IMR-90 (cell line): ENCODE measurements at regions of chr20 and their contacts with region 1.

Region 1: GRCh38 chr20:41028348-41029148 is at the start of gene TOP1:
- DNase-seq: peak; percentile 100
- ATAC-seq: peak; percentile 98
- H3K4me3 ChIP-seq: peak within 1 kb of the TSS; percentile 76
- H3K27ac ChIP-seq: peak within 1 kb of the TSS; percentile 97
- H3K4me1 ChIP-seq: peaks cover 5% of the 10 kb centered on the region
- H3K27me3 ChIP-seq: no peaks in the 10 kb centered on the region
- CTCF ChIP-seq: no peak
- POLR2A ChIP-seq: peak; percentile 96
- RAD21 ChIP-seq: no peak
- total RNA-seq, gene TOP1: 14.0 and 20.8 TPM in 2 replicates

Region 2: DNA sequence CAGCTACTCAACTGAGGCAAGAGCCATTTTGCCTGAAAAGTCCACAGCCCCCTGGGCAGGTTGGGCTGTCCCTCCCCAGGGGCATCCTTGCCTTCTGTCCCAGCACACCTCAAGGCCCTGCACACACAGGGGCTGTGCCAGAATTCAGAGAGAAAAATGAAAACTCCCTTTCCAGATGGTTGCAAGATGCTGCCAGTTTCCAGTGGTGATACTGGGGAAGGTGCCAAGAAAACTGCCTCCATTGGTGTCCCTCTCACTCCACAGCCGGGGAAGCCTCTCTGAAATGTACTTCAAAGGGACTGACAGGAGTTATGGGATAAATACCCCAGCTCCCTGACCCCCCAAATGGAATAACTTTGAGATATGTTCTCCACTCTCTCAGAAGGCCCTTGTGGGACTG is 185.3 kb before region 1 on chr20:
- CTCF ChIA-PET with region 1: no interaction called
- POLR2A ChIA-PET with region 1: no interaction called
- dilution Hi-C with region 1: no loop called
- in situ Hi-C with region 1: no loop called
- intact Hi-C with region 1: no loop called
- DNase-seq: no peak
- ATAC-seq: no peak
- H3K4me3 ChIP-seq: no peak overlapping the region
- H3K27ac ChIP-seq: no peak overlapping the region
- H3K4me1 ChIP-seq: no peaks in the 10 kb centered on the region
- H3K27me3 ChIP-seq: no peaks in the 10 kb centered on the region
- CTCF ChIP-seq: no peak
- POLR2A ChIP-seq: no peak
- RAD21 ChIP-seq: no peak

Region 3: GRCh38 chr20:41011551-41012067 is 16.9 kb before region 1 on chr20:
- CTCF ChIA-PET with region 1: no interaction called
- POLR2A ChIA-PET with region 1: no interaction called
- dilution Hi-C with region 1: no loop called
- in situ Hi-C with region 1: no loop called
- intact Hi-C with region 1: loop called (anchors 2 kb)
- DNase-seq: no peak
- ATAC-seq: no peak
- H3K4me3 ChIP-seq: no peak overlapping the region
- H3K27ac ChIP-seq: no peak overlapping the region
- H3K4me1 ChIP-seq: peaks cover 10% of the 10 kb centered on the region
- H3K27me3 ChIP-seq: no peaks in the 10 kb centered on the region
- CTCF ChIP-seq: no peak
- POLR2A ChIP-seq: no peak
- RAD21 ChIP-seq: no peak

Region 4: GRCh38 chr20:41078329-41078728 is 49.8 kb after region 1 on chr20:
- CTCF ChIA-PET with region 1: interaction called, 3 read pairs
- POLR2A ChIA-PET with region 1: no interaction called
- dilution Hi-C with region 1: no loop called
- in situ Hi-C with region 1: no loop called
- intact Hi-C with region 1: loop called (anchors 2 kb)
- DNase-seq: peak; percentile 53
- ATAC-seq: peak; percentile 55
- H3K4me3 ChIP-seq: no peak overlapping the region
- H3K27ac ChIP-seq: no peak overlapping the region
- H3K4me1 ChIP-seq: peaks cover 14% of the 10 kb centered on the region
- H3K27me3 ChIP-seq: no peaks in the 10 kb centered on the region
- CTCF ChIP-seq: peak; percentile 61
- POLR2A ChIP-seq: no peak
- RAD21 ChIP-seq: peak; percentile 66

Region 5: DNA sequence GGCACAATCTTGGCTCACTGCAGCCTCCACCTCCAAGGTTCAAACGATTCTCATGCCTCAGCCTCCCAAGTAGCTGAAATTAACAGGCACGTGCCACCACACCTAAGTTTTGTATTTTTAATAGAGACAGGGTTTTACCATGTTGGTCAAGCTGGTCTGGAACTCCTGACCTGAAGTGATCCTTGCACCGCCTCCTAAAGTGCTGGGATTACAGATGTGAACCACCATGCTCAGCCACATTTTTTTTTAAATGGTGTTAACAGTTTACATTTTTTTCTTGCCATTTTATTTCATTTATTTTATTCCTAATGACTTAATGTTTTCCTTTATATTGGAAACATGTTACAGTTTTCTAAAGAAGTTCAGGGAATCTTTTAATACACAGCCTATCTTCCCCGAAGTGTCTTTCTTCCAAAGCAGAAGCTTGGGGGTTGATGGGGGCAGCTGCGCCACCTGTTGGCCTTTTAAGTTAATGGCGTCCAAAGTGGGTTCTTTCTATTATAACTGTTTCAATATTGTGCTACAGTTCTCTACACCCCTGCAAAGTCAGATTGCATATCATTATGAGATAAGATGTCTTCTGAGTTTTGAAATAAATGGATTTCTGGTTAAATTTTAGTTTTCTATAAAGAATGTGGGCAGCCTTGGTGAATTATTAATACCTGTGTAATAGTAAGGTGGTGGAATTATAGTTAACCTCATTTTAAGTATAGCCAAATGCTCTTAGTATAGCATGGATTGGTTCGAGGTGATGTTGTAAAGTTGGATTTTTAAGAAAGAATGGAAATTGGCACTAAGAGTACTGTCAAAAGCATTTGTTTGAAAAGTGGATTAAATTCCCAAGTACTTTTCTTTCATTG is 66.8 kb after region 1 on chr20:
- CTCF ChIA-PET with region 1: no interaction called
- POLR2A ChIA-PET with region 1: no interaction called
- dilution Hi-C with region 1: no loop called
- in situ Hi-C with region 1: no loop called
- intact Hi-C with region 1: loop called (anchors 1 kb)
- DNase-seq: peak; percentile 67
- ATAC-seq: peak; percentile 73
- H3K4me3 ChIP-seq: no peak overlapping the region
- H3K27ac ChIP-seq: no peak overlapping the region
- H3K4me1 ChIP-seq: peaks cover 23% of the 10 kb centered on the region
- H3K27me3 ChIP-seq: no peaks in the 10 kb centered on the region
- CTCF ChIP-seq: peak; percentile 85
- POLR2A ChIP-seq: no peak
- RAD21 ChIP-seq: peak; percentile 83

Region 6: DNA sequence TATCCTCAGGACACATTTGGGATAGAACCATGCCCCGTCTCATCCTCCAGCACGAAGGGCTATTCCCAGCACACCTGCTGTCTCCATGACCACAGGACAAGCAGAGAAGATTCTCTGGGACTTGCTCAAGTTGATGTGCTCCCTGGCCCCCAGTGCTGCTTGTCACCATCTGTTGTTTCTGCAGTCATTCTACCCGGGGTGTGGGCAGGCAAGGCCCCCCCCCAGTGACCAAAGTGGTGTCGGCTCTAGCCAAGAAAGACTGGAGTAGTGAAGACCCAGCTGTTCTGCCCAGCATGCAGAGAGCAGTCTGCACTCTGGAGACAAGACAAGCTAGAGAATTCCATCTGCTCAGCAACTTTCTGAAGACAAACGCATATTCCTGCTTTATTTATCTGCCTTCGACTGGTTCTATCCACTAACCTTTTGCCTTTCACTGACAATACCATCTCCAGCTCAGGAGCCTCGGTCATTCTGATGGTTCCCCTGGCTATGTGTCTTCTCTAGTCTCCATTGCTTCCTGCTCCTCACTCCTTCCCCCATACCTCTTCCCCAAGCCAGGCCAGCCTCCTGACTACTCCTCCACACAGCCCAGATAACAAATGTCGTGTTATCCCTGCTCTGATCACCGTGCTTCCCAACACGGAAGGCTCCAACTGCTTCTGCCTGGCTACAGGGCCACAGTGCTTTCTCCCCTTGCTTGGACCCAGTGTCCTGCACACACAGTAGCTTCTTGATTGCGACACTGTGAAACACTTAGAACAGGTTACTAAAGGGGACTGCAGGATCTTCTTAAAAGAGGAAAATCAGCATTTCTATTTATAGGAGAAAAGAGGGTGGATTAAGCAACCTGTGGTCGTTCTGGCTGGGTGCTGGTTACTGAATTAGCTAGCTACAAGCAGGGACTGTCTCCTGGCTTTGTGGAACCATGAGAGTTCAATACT is 424.7 kb after region 1 on chr20:
- CTCF ChIA-PET with region 1: no interaction called
- POLR2A ChIA-PET with region 1: no interaction called
- dilution Hi-C with region 1: no loop called
- in situ Hi-C with region 1: no loop called
- intact Hi-C with region 1: no loop called
- DNase-seq: no peak
- ATAC-seq: no peak
- H3K4me3 ChIP-seq: no peak overlapping the region
- H3K27ac ChIP-seq: no peak overlapping the region
- H3K4me1 ChIP-seq: peaks cover 10% of the 10 kb centered on the region
- H3K27me3 ChIP-seq: no peaks in the 10 kb centered on the region
- CTCF ChIP-seq: no peak
- POLR2A ChIP-seq: no peak
- RAD21 ChIP-seq: no peak